Activated CD8-positive, alpha-beta T cell treated with anti-CD3 and anti-CD28 coated beads, Interleukin-2, amount 10 ng/mL, durations not matched to agents 7 days and 5 days (primary cell): ENCODE measurements at regions of chr4 and their contacts with region 1.

Region 1: GRCh38 chr4:83284193-83285054 is at the start of gene COQ2:
- DNase-seq: peak; percentile 96
- ATAC-seq: peak; percentile 94
- H3K4me3 Mint-ChIP-seq: peak within 1 kb of the TSS; percentile 97
- H3K27ac Mint-ChIP-seq: peak within 1 kb of the TSS; percentile 100
- H3K4me1 Mint-ChIP-seq: peaks cover 49% of the 10 kb centered on the region
- H3K27me3 Mint-ChIP-seq: no peaks in the 10 kb centered on the region
- total RNA-seq, gene COQ2: 21.3 to 21.9 TPM

Region 2: GRCh38 chr4:82851885-82852750 is 432.3 kb before region 1 on chr4:
- CTCF ChIA-PET with region 1: interaction called, 16 read pairs
- POLR2A ChIA-PET with region 1: no interaction called
- DNase-seq: peak; percentile 34
- ATAC-seq: no peak
- H3K4me3 Mint-ChIP-seq: no peak overlapping the region
- H3K27ac Mint-ChIP-seq: no peak overlapping the region
- H3K4me1 Mint-ChIP-seq: peaks cover 8% of the 10 kb centered on the region
- H3K27me3 Mint-ChIP-seq: no peaks in the 10 kb centered on the region

Region 3: DNA sequence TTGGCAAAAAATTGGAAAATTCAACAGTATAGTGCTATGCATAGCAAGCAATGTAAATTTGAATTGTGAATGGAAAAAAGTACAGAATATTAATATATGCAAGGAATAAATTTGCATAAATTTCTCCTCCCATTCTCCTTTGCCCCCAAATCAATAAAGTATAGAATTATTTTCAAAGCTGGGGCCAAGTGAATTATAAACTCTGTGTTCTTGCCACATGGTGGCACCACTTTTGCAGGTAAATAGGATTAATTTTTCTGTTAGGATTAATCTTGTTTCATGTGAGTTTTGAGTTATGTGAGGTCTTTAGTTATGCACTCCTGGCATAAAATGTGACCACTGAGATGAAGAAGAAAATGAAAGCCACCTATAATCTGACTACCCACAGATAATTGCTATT is 229.5 kb before region 1 on chr4:
- CTCF ChIA-PET with region 1: interaction called, 47 read pairs
- POLR2A ChIA-PET with region 1: no interaction called
- DNase-seq: peak; percentile 41
- ATAC-seq: no peak
- H3K4me3 Mint-ChIP-seq: no peak overlapping the region
- H3K27ac Mint-ChIP-seq: no peak overlapping the region
- H3K4me1 Mint-ChIP-seq: no peaks in the 10 kb centered on the region
- H3K27me3 Mint-ChIP-seq: no peaks in the 10 kb centered on the region

Region 4: GRCh38 chr4:83252782-83253405 is 31.5 kb before region 1 on chr4:
- CTCF ChIA-PET with region 1: interaction called, 12 read pairs
- POLR2A ChIA-PET with region 1: interaction called, 5 read pairs
- DNase-seq: peak; percentile 87
- ATAC-seq: peak; percentile 82
- H3K4me3 Mint-ChIP-seq: no peak overlapping the region
- H3K27ac Mint-ChIP-seq: peak overlapping the region; percentile 64
- H3K4me1 Mint-ChIP-seq: peaks cover 37% of the 10 kb centered on the region
- H3K27me3 Mint-ChIP-seq: no peaks in the 10 kb centered on the region

Region 5: DNA sequence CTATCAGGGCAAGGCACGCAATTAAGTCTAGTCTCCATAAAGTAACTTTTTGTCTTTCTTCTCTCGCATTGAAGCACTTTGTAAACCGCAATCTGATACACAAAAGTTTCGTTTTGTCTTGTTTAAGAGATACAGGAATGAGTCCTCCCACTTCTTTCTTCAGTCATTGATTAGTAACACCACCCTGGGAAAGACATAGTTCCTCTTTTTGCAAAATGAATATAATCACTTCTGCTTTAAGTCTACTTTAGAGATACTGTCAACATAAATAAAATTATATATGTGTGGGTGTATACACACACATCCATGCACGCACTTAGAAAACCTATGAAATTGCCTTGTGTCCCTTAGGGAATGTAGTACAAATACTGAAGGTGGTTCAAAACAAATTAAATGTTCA is 11.5 kb before region 1 on chr4:
- CTCF ChIA-PET with region 1: interaction called, 46 read pairs
- POLR2A ChIA-PET with region 1: interaction called, 4 read pairs
- DNase-seq: no peak
- ATAC-seq: no peak
- H3K4me3 Mint-ChIP-seq: no peak overlapping the region
- H3K27ac Mint-ChIP-seq: no peak overlapping the region
- H3K4me1 Mint-ChIP-seq: peaks cover 20% of the 10 kb centered on the region
- H3K27me3 Mint-ChIP-seq: no peaks in the 10 kb centered on the region

Region 6: GRCh38 chr4:83455281-83456129 is 171.1 kb after region 1 on chr4 and contains the starts of genes HELQ and MRPS18C:
- CTCF ChIA-PET with region 1: interaction called, 7 read pairs
- POLR2A ChIA-PET with region 1: interaction called, 20 read pairs
- DNase-seq: peak; percentile 99
- ATAC-seq: peak; percentile 93
- H3K4me3 Mint-ChIP-seq: peak within 1 kb of the TSS; percentile 100
- H3K27ac Mint-ChIP-seq: peak within 1 kb of the TSS; percentile 100
- H3K4me1 Mint-ChIP-seq: peaks cover 45% of the 10 kb centered on the region
- H3K27me3 Mint-ChIP-seq: no peaks in the 10 kb centered on the region
- total RNA-seq, gene HELQ: 17.5 to 18.6 TPM
- total RNA-seq, gene MRPS18C: 69.7 to 72.1 TPM

Region 7: DNA sequence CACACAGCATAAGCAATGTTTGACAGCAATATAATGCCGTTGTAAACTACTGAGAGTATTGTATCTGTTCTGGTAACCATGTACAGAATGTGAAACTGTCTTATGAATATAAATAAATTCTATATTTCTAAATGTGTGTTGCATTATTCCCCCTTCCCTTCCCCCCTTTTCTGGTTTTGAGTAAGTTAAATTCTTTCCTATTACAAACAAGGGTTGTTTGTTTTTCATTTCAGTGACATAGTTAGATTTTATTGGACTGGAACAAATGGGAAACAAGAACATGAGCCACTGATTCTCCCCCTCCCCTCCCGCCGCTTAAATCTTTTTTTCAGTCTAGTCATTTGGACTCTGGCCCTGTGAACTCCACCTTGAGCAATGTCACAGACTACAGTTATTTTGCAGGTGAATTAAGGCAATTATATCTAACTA is 321.3 kb after region 1 on chr4:
- CTCF ChIA-PET with region 1: no interaction called
- POLR2A ChIA-PET with region 1: no interaction called
- DNase-seq: no peak
- ATAC-seq: no peak
- H3K4me3 Mint-ChIP-seq: no peak overlapping the region
- H3K27ac Mint-ChIP-seq: no peak overlapping the region
- H3K4me1 Mint-ChIP-seq: no peaks in the 10 kb centered on the region
- H3K27me3 Mint-ChIP-seq: peaks cover 7% of the 10 kb centered on the region